ENCODE measurements at regions of chr2 and their contacts with region 1.

Region 1: DNA sequence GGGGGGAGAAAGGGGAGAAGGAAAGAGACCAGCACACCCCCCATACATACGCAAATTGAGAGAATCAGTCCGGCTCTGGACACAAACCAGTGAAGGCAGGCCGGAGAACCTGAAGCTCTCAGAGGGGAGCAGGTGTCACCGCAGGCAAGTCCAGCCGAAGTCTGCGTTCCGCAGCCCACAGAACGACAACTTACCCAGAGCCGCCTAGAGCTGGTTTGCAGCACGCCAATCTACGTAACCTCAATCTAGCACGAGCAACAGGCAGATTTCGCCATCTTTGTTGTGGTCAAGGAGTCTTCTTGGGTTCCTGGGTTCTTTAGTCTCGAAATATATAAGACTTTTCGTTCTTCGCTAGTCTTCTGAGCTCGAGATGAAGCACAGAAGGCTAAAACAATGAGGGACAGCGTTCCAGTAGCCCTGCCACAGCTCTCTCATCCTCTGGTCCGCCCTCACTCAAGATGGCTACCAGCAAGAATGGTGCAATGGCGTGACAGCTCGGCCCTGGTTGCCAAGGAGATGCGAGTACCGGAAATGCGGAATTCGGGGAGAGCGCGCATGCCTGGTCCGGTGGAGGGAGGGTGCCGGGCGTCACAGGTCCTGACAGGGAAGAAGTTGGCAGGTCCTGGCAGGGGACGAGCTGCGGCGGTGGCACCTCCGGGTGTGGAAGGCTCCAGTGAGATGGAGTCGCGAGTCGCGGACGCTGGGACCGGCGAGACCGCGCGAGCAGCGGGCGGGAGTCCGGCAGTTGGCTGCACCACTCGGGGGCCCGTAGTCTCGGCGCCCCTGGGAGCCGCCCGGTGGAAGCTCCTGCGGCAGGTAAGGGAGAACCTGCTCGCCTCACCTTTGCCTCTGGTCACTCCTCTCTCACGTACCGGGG is at the starts of genes CAMKMT and PREPL:
- DNase-seq: peak; percentile 96
- ATAC-seq: peak; percentile 83
- H3K4me3 Mint-ChIP-seq: peak within 1 kb of the TSS; percentile 93
- H3K27ac Mint-ChIP-seq: peak within 1 kb of the TSS; percentile 100
- H3K4me1 Mint-ChIP-seq: peaks cover 35% of the 10 kb centered on the region
- H3K27me3 Mint-ChIP-seq: no peaks in the 10 kb centered on the region
- CTCF ChIP-seq: no peak
- total RNA-seq, gene CAMKMT: 17.4 and 21.2 TPM in 2 replicates
- total RNA-seq, gene PREPL: 29.2 and 33.3 TPM in 2 replicates

Region 2: GRCh38 chr2:43595603-43596412 is 765.8 kb before region 1 on chr2 and contains the start of gene THADA:
- CTCF ChIA-PET with region 1: no interaction called
- POLR2A ChIA-PET with region 1: no interaction called
- intact Hi-C with region 1: loop called (anchors 5 kb)
- DNase-seq: peak; percentile 86
- ATAC-seq: peak; percentile 98
- H3K4me3 Mint-ChIP-seq: peak within 1 kb of the TSS; percentile 97
- H3K27ac Mint-ChIP-seq: peak within 1 kb of the TSS; percentile 95
- H3K4me1 Mint-ChIP-seq: peaks cover 27% of the 10 kb centered on the region
- H3K27me3 Mint-ChIP-seq: no peaks in the 10 kb centered on the region
- CTCF ChIP-seq: no peak
- total RNA-seq, gene THADA: 43.2 and 51.4 TPM in 2 replicates

Region 3: DNA sequence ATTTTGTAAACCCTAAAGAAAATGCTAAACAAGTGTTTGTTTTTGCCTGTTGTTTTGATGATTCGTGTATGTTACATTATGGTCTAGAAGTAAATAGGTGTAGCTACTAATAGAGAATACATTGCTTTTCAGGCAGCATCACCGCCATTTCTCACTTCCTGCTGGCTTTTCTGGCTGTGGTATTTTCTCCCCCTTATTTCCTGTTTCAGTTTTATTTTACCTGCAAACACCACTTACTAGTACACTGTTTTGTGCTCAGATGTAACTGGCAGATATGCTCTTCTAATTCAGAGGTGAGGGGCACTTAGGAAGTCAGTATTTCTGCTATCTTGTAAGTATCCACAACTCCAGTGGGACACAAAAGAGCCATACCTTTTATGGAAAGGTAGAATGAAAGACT is 124.3 kb before region 1 on chr2:
- CTCF ChIA-PET with region 1: no interaction called
- POLR2A ChIA-PET with region 1: interaction called, 3 read pairs
- intact Hi-C with region 1: loop called (anchors 2 kb)
- DNase-seq: no peak
- ATAC-seq: peak; percentile 74
- H3K4me3 Mint-ChIP-seq: peak overlapping the region; percentile 11
- H3K27ac Mint-ChIP-seq: peak overlapping the region; percentile 27
- H3K4me1 Mint-ChIP-seq: peaks cover 35% of the 10 kb centered on the region
- H3K27me3 Mint-ChIP-seq: no peaks in the 10 kb centered on the region
- CTCF ChIP-seq: no peak

Region 4: GRCh38 chr2:45567974-45568789 is 1206.6 kb after region 1 on chr2:
- CTCF ChIA-PET with region 1: no interaction called
- POLR2A ChIA-PET with region 1: no interaction called
- intact Hi-C with region 1: loop called (anchors 10 kb)
- DNase-seq: no peak
- ATAC-seq: peak; percentile 99
- H3K4me3 Mint-ChIP-seq: peak overlapping the region; percentile 80
- H3K27ac Mint-ChIP-seq: peak overlapping the region; percentile 93
- H3K4me1 Mint-ChIP-seq: peaks cover 9% of the 10 kb centered on the region
- H3K27me3 Mint-ChIP-seq: no peaks in the 10 kb centered on the region
- CTCF ChIP-seq: no peak